Mammary epithelial cell (primary cell): ENCODE measurements at regions of chr2 and their contacts with region 1.

Region 1: GRCh38 chr2:131105156-131105949 is at the start of gene PLEKHB2:
- DNase-seq: peak; percentile 83
- H3K4me3 ChIP-seq: peak within 1 kb of the TSS; percentile 95 to 99 (median 99)
- H3K27ac ChIP-seq: peak within 1 kb of the TSS; percentile 72
- H3K4me1 ChIP-seq: peaks cover 23% of the 10 kb centered on the region
- H3K27me3 ChIP-seq: no peaks in the 10 kb centered on the region
- CTCF ChIP-seq: peak in 1 of 2 donors; percentile 32
- total RNA-seq, gene PLEKHB2: 72.1 to 130 TPM

Region 2: GRCh38 chr2:130156624-130157004 is 948.7 kb before region 1 on chr2:
- CTCF ChIA-PET with region 1: no interaction called
- dilution Hi-C with region 1: no loop called
- in situ Hi-C with region 1: no loop called
- intact Hi-C with region 1: no loop called
- DNase-seq: no peak
- H3K4me3 ChIP-seq: no peak overlapping the region
- H3K27ac ChIP-seq: no peak overlapping the region
- H3K4me1 ChIP-seq: no peaks in the 10 kb centered on the region
- H3K27me3 ChIP-seq: no peaks in the 10 kb centered on the region
- CTCF ChIP-seq: no peak

Region 3: DNA sequence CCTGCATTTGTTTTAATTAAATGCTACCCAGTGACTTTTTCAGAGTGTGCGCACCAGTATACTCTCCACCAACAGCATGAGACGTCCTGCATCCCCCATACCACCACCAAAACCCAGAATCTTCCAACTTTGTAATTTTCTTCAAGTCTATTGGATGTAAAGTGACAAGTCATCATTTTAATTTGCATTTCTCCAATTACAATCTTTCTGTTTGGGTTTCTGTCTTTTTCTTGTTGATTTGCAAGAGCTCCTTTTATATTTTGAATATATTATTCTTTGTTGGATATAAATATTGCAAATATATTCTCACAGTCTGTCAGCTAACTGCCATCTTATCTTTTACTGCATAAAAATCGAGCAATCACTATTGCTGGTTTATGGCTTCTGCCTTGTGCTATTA is 108.7 kb before region 1 on chr2:
- CTCF ChIA-PET with region 1: no interaction called
- dilution Hi-C with region 1: no loop called
- in situ Hi-C with region 1: no loop called
- intact Hi-C with region 1: no loop called
- DNase-seq: no peak
- H3K4me3 ChIP-seq: no peak overlapping the region
- H3K27ac ChIP-seq: no peak overlapping the region
- H3K4me1 ChIP-seq: no peaks in the 10 kb centered on the region
- H3K27me3 ChIP-seq: no peaks in the 10 kb centered on the region
- CTCF ChIP-seq: no peak

Region 4: GRCh38 chr2:131076707-131077106 is 28.6 kb before region 1 on chr2:
- CTCF ChIA-PET with region 1: no interaction called
- dilution Hi-C with region 1: loop called (anchors 5 kb)
- in situ Hi-C with region 1: no loop called
- intact Hi-C with region 1: no loop called
- DNase-seq: no peak
- H3K4me3 ChIP-seq: no peak overlapping the region
- H3K27ac ChIP-seq: no peak overlapping the region
- H3K4me1 ChIP-seq: peaks cover 8% of the 10 kb centered on the region
- H3K27me3 ChIP-seq: no peaks in the 10 kb centered on the region
- CTCF ChIP-seq: no peak

Region 5: GRCh38 chr2:131093006-131093695 is 12.2 kb before region 1 on chr2 and contains the start of gene FAM168B:
- CTCF ChIA-PET with region 1: no interaction called
- dilution Hi-C with region 1: no loop called
- in situ Hi-C with region 1: no loop called
- intact Hi-C with region 1: loop called (anchors 1 kb)
- DNase-seq: peak; percentile 90
- H3K4me3 ChIP-seq: peak within 1 kb of the TSS; percentile 76 to 100 (median 99)
- H3K27ac ChIP-seq: peak within 1 kb of the TSS; percentile 89
- H3K4me1 ChIP-seq: no peaks in the 10 kb centered on the region
- H3K27me3 ChIP-seq: no peaks in the 10 kb centered on the region
- CTCF ChIP-seq: no peak
- total RNA-seq, gene FAM168B: 89.5 to 108 TPM